Vagina (tissue), 2 donors: ENCODE measurements at regions of chr22 and their contacts with region 1.

Region 1: GRCh38 chr22:17724678-17725499 is 49.4 kb downstream of the BID start:
- DNase-seq: no peak
- H3K4me3 ChIP-seq: no peak overlapping the region
- H3K27ac ChIP-seq: no peak overlapping the region
- H3K4me1 ChIP-seq: peaks cover 10% of the 10 kb centered on the region
- H3K27me3 ChIP-seq: no peaks in the 10 kb centered on the region
- CTCF ChIP-seq: no peak
- POLR2A ChIP-seq: no peak

Region 2: DNA sequence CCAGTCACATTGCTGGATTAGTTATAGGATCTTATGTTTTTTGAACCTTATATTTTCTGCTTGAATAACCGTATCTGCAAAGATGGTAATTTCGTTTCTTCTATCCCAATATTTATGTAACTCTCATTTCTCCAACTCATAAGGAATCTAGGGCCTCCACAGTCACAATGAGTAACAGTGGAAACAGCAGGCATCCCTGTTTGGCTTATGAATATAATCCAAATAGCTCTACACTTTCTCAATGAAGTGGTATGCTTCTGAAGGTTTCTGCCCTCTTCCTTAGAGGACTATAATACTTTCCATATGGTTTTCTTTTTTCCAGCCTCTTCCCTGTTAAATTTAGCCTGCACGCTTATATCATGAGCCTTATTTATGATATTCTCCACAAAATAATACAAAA is 112.8 kb before region 1 on chr22:
- intact Hi-C with region 1: no loop called
- DNase-seq: no peak
- H3K4me3 ChIP-seq: no peak overlapping the region
- H3K27ac ChIP-seq: no peak overlapping the region
- H3K4me1 ChIP-seq: no peaks in the 10 kb centered on the region
- H3K27me3 ChIP-seq: no peaks in the 10 kb centered on the region
- CTCF ChIP-seq: no peak
- POLR2A ChIP-seq: no peak

Region 3: DNA sequence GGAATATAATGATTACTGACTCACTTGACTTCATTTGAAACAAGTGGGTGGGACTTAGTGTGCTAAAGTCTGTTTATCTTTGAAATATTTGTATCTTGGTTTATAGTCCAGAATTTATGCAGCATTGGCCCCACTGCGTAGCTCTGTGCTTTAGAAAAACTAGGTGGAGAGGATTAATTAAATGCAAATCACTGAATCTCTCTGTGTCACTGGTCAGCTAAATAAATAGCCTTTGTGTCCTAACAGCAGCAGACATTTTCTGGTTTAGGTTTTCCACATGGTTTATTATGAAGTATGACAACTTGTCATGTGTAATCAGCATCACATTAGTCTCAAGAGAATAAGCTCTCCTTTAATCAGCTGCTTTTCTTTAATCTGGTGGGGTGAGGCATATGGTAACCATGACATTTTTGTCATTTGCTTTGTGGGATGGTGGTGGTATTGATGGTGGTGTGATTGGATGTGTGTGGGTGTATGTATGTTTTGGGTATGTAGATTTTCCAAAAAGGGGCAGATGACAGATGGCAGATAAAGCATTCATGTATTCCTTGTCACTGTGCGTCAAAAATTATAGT is 52.4 kb before region 1 on chr22:
- intact Hi-C with region 1: no loop called
- DNase-seq: no peak
- H3K4me3 ChIP-seq: no peak overlapping the region
- H3K27ac ChIP-seq: no peak overlapping the region
- H3K4me1 ChIP-seq: peaks cover 13% of the 10 kb centered on the region
- H3K27me3 ChIP-seq: no peaks in the 10 kb centered on the region
- CTCF ChIP-seq: no peak
- POLR2A ChIP-seq: no peak

Region 4: GRCh38 chr22:17773606-17774205 is 48.8 kb after region 1 on chr22:
- intact Hi-C with region 1: loop called (anchors 2 kb)
- DNase-seq: no peak
- H3K4me3 ChIP-seq: peak overlapping the region; percentile 62 to 76
- H3K27ac ChIP-seq: peak overlapping the region; percentile 70
- H3K4me1 ChIP-seq: peaks cover 26% of the 10 kb centered on the region
- H3K27me3 ChIP-seq: no peaks in the 10 kb centered on the region
- CTCF ChIP-seq: no peak
- POLR2A ChIP-seq: no peak

Region 5: DNA sequence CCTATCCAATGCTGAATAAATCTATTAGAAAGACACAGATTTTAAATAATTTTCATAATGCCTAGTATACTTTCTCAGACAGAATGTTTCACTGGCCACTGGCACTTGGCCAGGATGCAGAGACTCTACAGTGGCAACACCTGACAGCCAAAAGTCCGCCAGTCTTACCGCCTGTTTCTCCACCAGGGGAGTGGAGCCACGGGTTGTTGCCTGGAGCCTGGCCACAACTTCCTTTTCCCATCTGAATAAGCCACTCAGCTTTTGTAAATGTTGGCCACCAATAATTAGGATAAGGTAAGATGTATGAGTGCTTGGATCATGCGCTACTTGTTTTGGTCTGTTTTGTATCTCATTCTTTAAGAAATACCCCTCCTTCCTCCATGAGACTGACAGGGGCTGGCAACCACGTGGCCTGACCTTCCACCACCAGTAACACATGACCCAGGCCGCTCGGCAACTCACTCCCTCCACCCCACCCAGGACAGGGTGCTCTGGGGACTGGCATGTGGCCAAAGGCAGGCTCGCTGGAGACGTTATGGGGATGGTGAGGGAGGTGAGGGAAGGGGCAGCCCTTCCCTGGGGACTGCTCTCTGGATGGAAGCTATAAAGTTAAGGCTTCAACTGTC is 142.4 kb after region 1 on chr22:
- intact Hi-C with region 1: no loop called
- DNase-seq: no peak
- H3K4me3 ChIP-seq: no peak overlapping the region
- H3K27ac ChIP-seq: no peak overlapping the region
- H3K4me1 ChIP-seq: peaks cover 16% of the 10 kb centered on the region
- H3K27me3 ChIP-seq: no peaks in the 10 kb centered on the region
- CTCF ChIP-seq: no peak
- POLR2A ChIP-seq: no peak